Activated T-helper 2 cell treated with anti-CD3 and anti-CD28 coated beads, Interferon-gamma antibody, Interleukin-2, Interleukin-4, amounts not matched to agents 10 μg/mL and 5 μg/mL and 100 μg/mL, durations not matched to agents 14 hours and 24 hours and 36 hours (primary cell): ENCODE measurements at regions of chr12 and their contacts with region 1.

Region 1: DNA sequence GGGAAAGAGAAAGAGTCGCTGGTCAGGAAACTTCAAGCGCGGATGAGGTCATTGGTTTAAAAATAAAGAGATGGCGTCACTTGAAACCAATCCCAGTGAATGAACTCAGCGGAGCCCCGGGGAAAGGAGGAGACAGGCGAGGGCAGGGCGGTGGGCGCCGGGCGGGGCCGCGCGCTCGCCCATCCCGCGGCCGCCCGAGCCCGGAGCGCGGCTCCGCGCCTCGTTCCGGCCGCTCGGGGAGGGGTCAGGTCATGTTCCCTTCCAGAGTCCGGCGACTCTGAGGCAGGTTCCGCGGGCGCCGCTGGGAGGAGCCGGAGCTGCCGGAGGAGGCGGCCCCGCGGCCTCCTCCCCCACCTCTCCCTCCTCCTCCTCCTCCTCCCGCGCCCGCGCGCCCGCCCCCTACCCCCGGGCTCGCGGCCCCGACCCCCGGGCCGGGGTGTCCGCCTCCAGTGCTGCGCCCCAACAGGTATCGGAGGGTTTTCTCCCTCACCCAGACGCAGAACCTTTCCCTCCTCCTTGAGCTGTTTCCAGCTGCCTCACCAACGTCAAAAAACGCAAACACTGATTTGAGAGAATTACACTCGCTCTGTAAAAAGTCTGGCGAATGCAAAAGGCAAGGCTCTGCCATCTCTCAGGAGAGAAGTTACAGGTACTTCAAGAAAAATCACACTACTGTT is at the start of gene DUSP16:
- DNase-seq: peak; percentile 84
- H3K4me3 Mint-ChIP-seq: peak within 1 kb of the TSS; percentile 85
- H3K27ac Mint-ChIP-seq: peak within 1 kb of the TSS; percentile 95
- H3K4me1 Mint-ChIP-seq: peaks cover 37% of the 10 kb centered on the region
- H3K27me3 Mint-ChIP-seq: no peaks in the 10 kb centered on the region
- total RNA-seq, gene DUSP16: 64.7 and 66.5 TPM in 2 replicates

Region 2: GRCh38 chr12:12171991-12172521 is 390.7 kb before region 1 on chr12:
- intact Hi-C with region 1: no loop called
- DNase-seq: peak; percentile 16
- H3K4me3 Mint-ChIP-seq: no peak overlapping the region
- H3K27ac Mint-ChIP-seq: no peak overlapping the region
- H3K4me1 Mint-ChIP-seq: peaks cover 13% of the 10 kb centered on the region
- H3K27me3 Mint-ChIP-seq: peaks cover 58% of the 10 kb centered on the region

Region 3: GRCh38 chr12:12272869-12273268 is 289.9 kb before region 1 on chr12:
- intact Hi-C with region 1: no loop called
- DNase-seq: no peak
- H3K4me3 Mint-ChIP-seq: no peak overlapping the region
- H3K27ac Mint-ChIP-seq: no peak overlapping the region
- H3K4me1 Mint-ChIP-seq: no peaks in the 10 kb centered on the region
- H3K27me3 Mint-ChIP-seq: peaks cover 19% of the 10 kb centered on the region

Region 4: DNA sequence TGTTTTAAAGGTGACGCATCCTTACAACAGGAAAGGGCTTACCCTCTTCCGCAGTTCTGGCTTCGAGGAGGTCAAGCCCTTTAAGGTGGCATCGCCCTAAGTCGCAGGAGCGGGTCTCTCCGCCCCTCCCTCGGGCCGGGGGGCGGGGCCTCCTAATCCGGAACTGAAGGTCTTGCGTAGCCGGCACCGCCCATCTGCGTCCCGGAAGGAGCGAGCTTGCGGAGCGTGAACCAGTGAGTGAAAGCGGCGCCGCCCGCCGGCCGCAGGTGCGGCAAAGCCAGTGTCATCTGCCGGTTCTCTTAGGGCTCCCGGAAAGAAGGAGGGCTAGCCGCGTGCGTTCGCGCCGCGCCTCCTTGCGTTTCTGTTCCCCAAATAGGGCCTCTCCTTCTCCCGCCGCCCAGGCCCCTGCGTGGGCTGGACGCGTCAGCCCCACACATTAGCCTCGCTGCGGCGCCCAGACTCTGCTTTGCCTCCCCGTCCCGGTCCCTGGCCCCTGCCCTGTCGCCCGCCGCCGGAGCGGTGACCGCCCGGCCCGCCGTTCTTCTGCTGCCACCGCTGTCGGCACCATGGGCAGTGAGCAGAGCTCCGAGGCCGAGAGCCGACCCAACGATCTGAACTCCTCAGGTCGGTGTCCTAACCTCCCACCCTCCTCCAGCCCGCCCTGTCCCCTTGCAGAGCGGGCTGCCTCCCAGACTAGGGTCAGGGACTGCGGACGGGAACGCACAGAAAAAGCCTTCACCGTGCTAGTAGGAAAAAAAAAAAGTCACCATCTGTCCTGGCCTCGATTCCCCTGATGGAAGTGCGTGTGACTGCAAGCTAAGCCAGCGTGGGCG is 205.6 kb before region 1 on chr12 and contains the start of gene BORCS5:
- intact Hi-C with region 1: loop called (anchors 2 kb)
- DNase-seq: peak; percentile 98
- H3K4me3 Mint-ChIP-seq: peak within 1 kb of the TSS; percentile 96
- H3K27ac Mint-ChIP-seq: peak within 1 kb of the TSS; percentile 99
- H3K4me1 Mint-ChIP-seq: peaks cover 41% of the 10 kb centered on the region
- H3K27me3 Mint-ChIP-seq: no peaks in the 10 kb centered on the region
- total RNA-seq, gene BORCS5: 41.8 and 45.9 TPM in 2 replicates

Region 5: GRCh38 chr12:12442548-12443071 is 120.1 kb before region 1 on chr12:
- intact Hi-C with region 1: loop called (anchors 5 kb)
- DNase-seq: no peak
- H3K4me3 Mint-ChIP-seq: no peak overlapping the region
- H3K27ac Mint-ChIP-seq: peak overlapping the region; percentile 95
- H3K4me1 Mint-ChIP-seq: peaks cover 88% of the 10 kb centered on the region
- H3K27me3 Mint-ChIP-seq: no peaks in the 10 kb centered on the region

Region 6: DNA sequence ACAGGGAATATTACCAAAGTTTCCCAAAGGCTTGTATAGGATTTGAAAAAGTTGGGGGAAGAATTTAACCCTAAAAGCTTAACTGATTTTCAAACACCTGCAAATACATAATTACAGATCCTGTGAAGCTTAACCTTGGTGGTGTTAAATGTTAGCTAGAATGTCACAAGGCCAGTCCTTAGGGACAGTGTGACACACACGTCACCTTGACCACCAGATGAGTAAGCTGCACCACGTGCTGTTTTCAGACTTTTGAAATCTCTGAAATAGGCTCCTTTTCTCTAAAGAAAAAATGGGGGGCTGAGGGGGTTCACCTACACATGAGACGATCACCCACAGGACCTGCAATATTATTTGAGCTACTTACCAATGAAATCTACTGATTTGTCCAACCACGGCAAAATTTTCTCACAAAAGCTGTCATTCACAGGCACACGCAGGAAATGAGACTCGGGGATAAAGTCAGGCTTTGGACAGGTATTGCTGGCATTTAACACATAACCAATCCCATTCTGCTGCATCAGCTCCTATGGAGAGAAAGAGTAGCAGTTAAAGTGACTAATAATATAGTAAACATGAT is 76.0 kb before region 1 on chr12:
- intact Hi-C with region 1: loop called (anchors 2 kb)
- DNase-seq: no peak
- H3K4me3 Mint-ChIP-seq: no peak overlapping the region
- H3K27ac Mint-ChIP-seq: peak overlapping the region; percentile 80
- H3K4me1 Mint-ChIP-seq: peaks cover 51% of the 10 kb centered on the region
- H3K27me3 Mint-ChIP-seq: no peaks in the 10 kb centered on the region

Region 7: DNA sequence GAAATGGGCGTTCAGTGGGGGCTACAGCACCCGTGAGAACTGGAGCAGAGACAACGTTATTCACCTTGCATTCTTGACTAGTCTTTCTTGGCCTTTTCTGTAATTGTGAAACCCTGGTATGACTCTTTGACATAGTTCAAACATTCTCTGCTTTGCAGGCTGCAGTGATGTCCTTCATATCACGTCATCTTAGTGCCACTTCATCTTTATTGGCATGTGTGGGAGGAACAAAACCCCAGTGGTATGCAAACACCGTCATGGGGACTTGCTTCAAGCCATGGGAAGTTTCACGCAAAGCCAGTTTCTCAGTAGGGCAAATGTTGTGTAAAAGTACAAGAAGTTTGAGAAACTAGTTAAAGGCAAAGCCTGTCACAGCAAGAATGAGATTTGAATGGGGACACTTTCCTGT is 20.2 kb after region 1 on chr12:
- intact Hi-C with region 1: loop called (anchors 1 kb)
- DNase-seq: peak; percentile 19
- H3K4me3 Mint-ChIP-seq: no peak overlapping the region
- H3K27ac Mint-ChIP-seq: peak overlapping the region; percentile 86
- H3K4me1 Mint-ChIP-seq: peaks cover 57% of the 10 kb centered on the region
- H3K27me3 Mint-ChIP-seq: no peaks in the 10 kb centered on the region

Region 8: GRCh38 chr12:12628013-12628412 is 65.3 kb after region 1 on chr12:
- intact Hi-C with region 1: no loop called
- DNase-seq: no peak
- H3K4me3 Mint-ChIP-seq: no peak overlapping the region
- H3K27ac Mint-ChIP-seq: no peak overlapping the region
- H3K4me1 Mint-ChIP-seq: peaks cover 50% of the 10 kb centered on the region
- H3K27me3 Mint-ChIP-seq: no peaks in the 10 kb centered on the region

Region 9: DNA sequence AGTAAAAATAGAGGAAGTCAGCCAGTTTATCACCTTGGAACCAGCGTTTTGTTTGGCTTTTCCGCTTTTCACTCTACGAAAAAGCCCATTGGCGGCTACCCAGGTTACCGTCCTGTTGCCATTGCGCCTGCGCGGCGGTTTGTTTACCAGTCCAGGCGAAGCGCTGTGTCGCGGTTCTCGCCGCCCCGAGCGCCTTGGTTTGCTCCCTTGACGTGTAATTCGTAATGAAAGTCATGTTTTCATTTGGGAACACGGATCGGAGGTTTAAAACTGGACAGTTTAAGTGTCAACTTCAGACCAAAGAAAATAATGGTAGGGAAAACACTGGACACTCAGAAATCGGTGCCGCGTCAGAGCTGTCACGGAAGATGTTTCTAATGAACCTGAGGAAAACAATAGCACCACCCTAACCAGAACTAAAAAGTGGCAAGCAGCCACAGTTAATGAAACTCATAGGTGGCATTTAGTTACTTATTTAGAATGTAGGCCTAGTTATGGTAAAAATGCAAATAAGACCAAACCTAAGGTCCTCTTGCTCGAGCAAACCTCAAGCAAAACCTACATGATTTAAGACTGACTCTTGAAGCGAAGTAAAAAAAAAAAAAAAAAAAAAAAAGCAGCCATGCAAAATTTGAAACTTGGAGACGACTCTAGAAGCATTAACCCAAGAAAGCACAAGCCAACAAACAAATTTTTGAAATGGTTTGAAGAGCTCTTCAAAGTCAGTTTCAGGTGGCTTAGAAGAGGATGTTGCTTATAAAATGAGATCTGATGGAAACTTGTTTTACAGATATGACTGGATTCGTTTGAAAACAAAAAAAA is 134.1 kb after region 1 on chr12:
- intact Hi-C with region 1: loop called (anchors 5 kb)
- DNase-seq: peak; percentile 90
- H3K4me3 Mint-ChIP-seq: peak overlapping the region; percentile 97
- H3K27ac Mint-ChIP-seq: peak overlapping the region; percentile 99
- H3K4me1 Mint-ChIP-seq: peaks cover 58% of the 10 kb centered on the region
- H3K27me3 Mint-ChIP-seq: no peaks in the 10 kb centered on the region